Activated naive CD4-positive, alpha-beta T cell treated with anti-CD3 and anti-CD28 coated beads for 36 hours (primary cell): ENCODE measurements at regions of chr20 and their contacts with region 1.

Region 1: DNA sequence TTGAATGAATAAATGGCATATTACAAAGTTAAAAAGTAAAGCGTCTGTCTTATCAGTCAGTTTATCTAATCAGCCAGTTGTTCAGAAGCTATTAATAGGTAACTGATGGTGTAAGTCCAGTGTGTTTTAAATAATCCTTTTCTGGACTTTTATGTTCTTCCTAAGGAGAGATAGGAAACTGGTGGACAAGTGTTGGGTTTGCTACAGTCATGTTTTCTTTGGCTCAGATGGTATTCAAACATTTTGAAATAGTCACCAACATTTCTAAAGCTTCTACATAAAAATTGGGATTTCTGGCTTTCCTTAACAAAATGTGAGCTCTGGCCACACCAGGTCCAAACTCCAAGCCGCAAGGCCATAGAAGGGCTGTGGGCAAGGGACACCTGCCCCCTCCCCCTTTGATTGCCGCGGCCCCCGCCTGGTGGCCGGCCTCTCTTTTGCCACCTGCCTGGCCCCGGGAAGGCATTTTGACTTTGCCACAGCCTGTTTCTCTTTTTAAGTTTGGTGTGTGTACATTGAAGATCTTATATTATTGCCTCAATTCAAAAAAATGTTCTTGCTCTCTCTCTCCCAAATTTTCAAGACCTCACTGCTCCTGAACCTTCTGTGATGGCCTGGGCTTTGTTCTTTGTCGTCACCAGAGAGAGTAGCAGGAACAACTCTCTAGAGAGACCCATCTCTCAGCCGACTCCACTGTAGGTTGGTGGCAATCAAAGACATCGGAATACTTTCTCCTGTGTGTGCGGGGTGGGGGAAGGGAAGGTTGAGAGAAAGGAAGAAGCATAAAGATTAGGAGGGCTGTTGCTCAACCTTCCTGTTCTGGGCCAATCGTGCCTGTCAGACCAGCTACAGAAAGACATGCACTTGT is 84.0 kb upstream of the ZNF217 start:
- DNase-seq: peak; percentile 67
- H3K4me3 Mint-ChIP-seq: peak overlapping the region; percentile 57
- H3K27ac Mint-ChIP-seq: peak overlapping the region; percentile 75
- H3K4me1 Mint-ChIP-seq: peaks cover 24% of the 10 kb centered on the region
- H3K27me3 Mint-ChIP-seq: no peaks in the 10 kb centered on the region

Region 2: DNA sequence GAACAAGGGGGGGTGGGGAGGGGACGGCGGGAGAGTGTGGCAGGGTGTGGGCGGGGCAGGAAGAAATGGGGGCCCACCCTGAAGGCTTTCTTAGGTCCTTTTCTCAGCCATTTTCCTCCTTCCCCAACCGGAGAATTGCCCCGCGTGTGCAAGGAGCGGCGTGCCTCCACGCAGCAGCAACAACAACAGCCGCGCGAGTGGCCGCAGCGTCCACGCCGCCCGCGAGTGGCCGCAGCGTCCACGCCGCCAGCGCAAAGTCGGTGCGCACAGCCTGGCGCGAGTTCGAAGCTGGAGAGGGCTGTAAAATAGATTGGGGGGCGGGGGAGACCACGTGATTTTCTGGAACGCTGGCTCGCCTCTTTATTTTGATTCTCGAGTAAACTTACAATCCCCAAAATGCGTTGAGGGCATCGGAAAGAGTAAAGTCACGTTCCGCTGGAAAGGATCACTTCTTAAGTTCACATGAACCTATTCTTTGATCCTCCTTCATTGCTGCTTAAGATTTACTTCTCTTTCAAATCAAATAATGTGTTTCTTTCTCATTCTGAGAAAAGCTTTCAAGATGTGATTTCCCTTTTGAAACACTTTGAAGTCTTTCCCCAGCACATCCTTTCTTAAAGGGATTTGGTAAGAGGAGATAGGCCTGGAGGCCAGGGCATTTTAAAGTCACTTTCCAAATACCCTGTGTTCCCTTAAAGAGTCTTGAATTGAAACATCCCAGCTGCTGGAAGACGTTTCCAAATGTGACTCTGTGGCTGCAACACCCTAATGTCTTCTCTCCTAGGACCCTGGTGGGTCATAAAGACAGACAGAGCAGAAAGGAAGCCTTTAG is 17.4 kb before region 1 on chr20:
- CTCF ChIA-PET with region 1: interaction called, 5 read pairs
- intact Hi-C with region 1: loop called (anchors 2 kb)
- DNase-seq: peak; percentile 56
- H3K4me3 Mint-ChIP-seq: peak overlapping the region; percentile 77
- H3K27ac Mint-ChIP-seq: peak overlapping the region; percentile 88
- H3K4me1 Mint-ChIP-seq: peaks cover 61% of the 10 kb centered on the region
- H3K27me3 Mint-ChIP-seq: no peaks in the 10 kb centered on the region

Region 3: DNA sequence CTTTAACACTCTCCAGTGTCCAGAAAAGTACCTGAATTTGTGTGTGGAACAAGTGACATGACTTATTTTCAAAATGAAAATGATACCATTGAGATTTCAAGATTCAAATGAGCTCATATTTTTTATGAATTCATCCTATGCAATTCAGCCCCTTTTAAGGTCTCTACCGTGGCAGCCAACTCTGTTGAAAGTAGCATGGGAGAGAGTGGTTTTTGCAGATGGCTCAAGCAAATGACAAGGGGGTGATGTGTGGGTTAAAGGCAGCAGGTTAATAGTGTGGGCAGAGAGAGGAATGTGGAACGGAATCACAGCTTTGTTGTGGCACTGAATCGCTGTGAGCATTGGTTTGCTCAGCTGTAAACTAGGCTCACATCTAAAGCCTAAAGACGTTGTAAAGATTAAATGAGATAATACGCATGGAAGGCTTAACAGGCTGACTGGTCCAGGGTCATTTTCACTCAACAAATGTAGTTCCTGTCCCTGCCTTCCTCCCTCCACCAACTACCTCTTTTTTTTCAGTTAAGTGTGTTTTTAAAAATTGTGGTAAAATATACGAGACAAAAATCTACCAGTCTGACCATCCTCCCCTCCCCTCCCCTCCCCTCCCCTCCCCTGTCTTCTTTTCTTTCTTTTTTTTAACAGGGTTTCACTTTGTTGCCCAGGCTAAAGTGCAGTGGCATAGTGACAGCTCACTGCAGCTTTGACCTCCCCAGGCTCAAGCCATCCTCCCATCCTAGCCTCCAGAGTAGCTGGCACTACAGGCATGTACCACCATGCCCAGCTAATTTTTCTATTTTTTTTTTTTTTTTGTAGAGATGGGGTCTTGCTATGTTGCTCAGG is 30.7 kb after region 1 on chr20:
- CTCF ChIA-PET with region 1: no interaction called
- intact Hi-C with region 1: no loop called
- DNase-seq: peak; percentile 58
- H3K4me3 Mint-ChIP-seq: peak overlapping the region; percentile 64
- H3K27ac Mint-ChIP-seq: peak overlapping the region; percentile 90
- H3K4me1 Mint-ChIP-seq: peaks cover 53% of the 10 kb centered on the region
- H3K27me3 Mint-ChIP-seq: no peaks in the 10 kb centered on the region